Calu3 (cell line): ENCODE measurements at regions of chr22 and their contacts with region 1.

Region 1: DNA sequence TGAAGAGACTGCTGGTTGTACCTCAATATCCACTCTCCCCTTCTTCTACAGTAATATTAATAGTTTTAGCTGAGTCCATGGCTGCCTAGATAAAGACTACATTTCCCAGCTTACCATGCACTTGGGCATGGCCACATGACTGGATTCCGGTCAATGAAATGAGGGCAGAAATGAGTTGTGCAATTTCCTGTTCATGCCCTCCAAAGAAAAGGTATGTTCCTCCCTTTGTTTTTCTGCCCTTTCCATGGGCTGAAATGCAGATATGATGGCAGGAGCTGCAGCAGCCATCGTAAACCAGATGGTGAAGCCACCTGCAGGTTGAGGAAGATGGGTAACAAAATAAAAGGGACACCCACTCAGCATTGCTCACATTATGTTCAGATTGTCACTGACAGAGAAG is 15.3 kb upstream of the ELFN2 start:
- DNase-seq: peak; percentile 40
- H3K4me3 Mint-ChIP-seq: no peak overlapping the region
- H3K27ac Mint-ChIP-seq: no peak overlapping the region
- H3K4me1 Mint-ChIP-seq: peaks cover 12% of the 10 kb centered on the region
- H3K27me3 Mint-ChIP-seq: no peaks in the 10 kb centered on the region
- CTCF ChIP-seq: no peak

Region 2: DNA sequence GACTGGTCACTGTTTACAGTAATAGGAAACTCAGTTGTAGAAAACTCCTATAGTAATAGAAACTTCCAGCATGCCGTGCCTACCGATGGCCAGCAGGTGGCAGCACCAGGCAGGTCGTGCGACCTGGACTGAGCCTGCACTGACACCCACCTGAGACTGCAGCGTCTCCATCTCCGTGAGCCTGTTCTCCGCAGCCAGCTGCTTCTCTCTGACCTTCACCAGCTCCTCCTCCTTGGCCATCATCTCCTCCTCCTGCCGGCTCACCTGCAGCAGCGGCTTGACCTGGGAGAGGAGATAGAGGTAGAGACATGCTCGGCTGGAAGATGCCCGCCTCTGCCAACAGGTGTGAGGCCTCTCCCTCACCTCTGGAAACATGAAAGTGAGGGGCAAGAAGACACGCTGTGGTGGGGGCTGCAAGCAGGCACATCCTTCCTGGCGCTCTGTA is 1141.1 kb before region 1 on chr22:
- CTCF ChIA-PET with region 1: no interaction called
- intact Hi-C with region 1: no loop called
- DNase-seq: peak; percentile 82
- H3K4me3 Mint-ChIP-seq: no peak overlapping the region
- H3K27ac Mint-ChIP-seq: no peak overlapping the region
- H3K4me1 Mint-ChIP-seq: peaks cover 8% of the 10 kb centered on the region
- H3K27me3 Mint-ChIP-seq: no peaks in the 10 kb centered on the region
- CTCF ChIP-seq: peak; percentile 90

Region 3: GRCh38 chr22:37141971-37142370 is 300.6 kb before region 1 on chr22:
- CTCF ChIA-PET with region 1: interaction called, 10 read pairs
- intact Hi-C with region 1: no loop called
- DNase-seq: no peak
- H3K4me3 Mint-ChIP-seq: no peak overlapping the region
- H3K27ac Mint-ChIP-seq: no peak overlapping the region
- H3K4me1 Mint-ChIP-seq: peaks cover 12% of the 10 kb centered on the region
- H3K27me3 Mint-ChIP-seq: peaks cover 86% of the 10 kb centered on the region
- CTCF ChIP-seq: no peak